ENCODE measurements at regions of chr4 and their contacts with region 1.

Region 1: GRCh38 chr4:38684951-38685844 is 21.2 kb downstream of the KLF3 start:
- DNase-seq: no peak
- ATAC-seq: no peak
- H3K4me3 ChIP-seq: no peak overlapping the region
- H3K4me3 Mint-ChIP-seq: peak overlapping the region in 1 of 3 donors; percentile 67
- H3K27ac ChIP-seq: no peak overlapping the region
- H3K27ac Mint-ChIP-seq: peak overlapping the region; percentile 39 to 67
- H3K4me1 ChIP-seq: peaks cover 33 to 55% of the 10 kb centered on the region in 2 experiments
- H3K4me1 Mint-ChIP-seq: peaks cover 81 to 90% (median 81%) of the 10 kb centered on the region in 3 donors
- H3K27me3 ChIP-seq: no peaks in the 10 kb centered on the region
- H3K27me3 Mint-ChIP-seq: no peaks in the 10 kb centered on the region

Region 2: GRCh38 chr4:38644201-38644600 is 41.0 kb before region 1 on chr4:
- CTCF ChIA-PET with region 1: no interaction called
- POLR2A ChIA-PET with region 1: interaction called in 1 of 2 experiments, 11 read pairs
- DNase-seq: no peak
- ATAC-seq: no peak
- H3K4me3 ChIP-seq: no peak overlapping the region
- H3K4me3 Mint-ChIP-seq: no peak overlapping the region
- H3K27ac ChIP-seq: no peak overlapping the region
- H3K27ac Mint-ChIP-seq: no peak overlapping the region
- H3K4me1 ChIP-seq: peaks cover 3 to 5% of the 10 kb centered on the region in 2 experiments
- H3K4me1 Mint-ChIP-seq: peaks cover 11 to 17% (median 15%) of the 10 kb centered on the region in 3 donors
- H3K27me3 ChIP-seq: no peaks in the 10 kb centered on the region
- H3K27me3 Mint-ChIP-seq: peaks cover 0 to 3% of the 10 kb centered on the region in 2 donors

Region 3: GRCh38 chr4:38782452-38783108 is 97.4 kb after region 1 on chr4 and contains the start of gene TLR10:
- CTCF ChIA-PET with region 1: no interaction called
- POLR2A ChIA-PET with region 1: no interaction called
- DNase-seq: peak in 13 of 35 experiments; percentile 18 to 73 (median 28)
- ATAC-seq: peak; percentile 51 to 73 (median 64)
- H3K4me3 ChIP-seq: no peak within 1 kb of the TSS
- H3K4me3 Mint-ChIP-seq: peak within 1 kb of the TSS in 1 of 3 donors; percentile 71
- H3K27ac ChIP-seq: no peak within 1 kb of the TSS
- H3K27ac Mint-ChIP-seq: peak within 1 kb of the TSS in 1 of 2 donors; percentile 44
- H3K4me1 ChIP-seq: peaks cover 0 to 2% of the 10 kb centered on the region in 2 experiments
- H3K4me1 Mint-ChIP-seq: peaks cover 3 to 6% (median 5%) of the 10 kb centered on the region in 3 donors
- H3K27me3 ChIP-seq: no peaks in the 10 kb centered on the region
- H3K27me3 Mint-ChIP-seq: no peaks in the 10 kb centered on the region
- total RNA-seq, gene TLR10: 0.47 to 2.6 (median 0.96) TPM

Region 4: GRCh38 chr4:39786838-39787237 is 1101.6 kb after region 1 on chr4:
- CTCF ChIA-PET with region 1: no interaction called
- POLR2A ChIA-PET with region 1: no interaction called
- DNase-seq: no peak
- ATAC-seq: no peak
- H3K4me3 ChIP-seq: no peak overlapping the region
- H3K4me3 Mint-ChIP-seq: no peak overlapping the region
- H3K27ac ChIP-seq: no peak overlapping the region
- H3K27ac Mint-ChIP-seq: no peak overlapping the region
- H3K4me1 ChIP-seq: no peaks in the 10 kb centered on the region
- H3K4me1 Mint-ChIP-seq: peaks cover 0 to 4% (median 0%) of the 10 kb centered on the region in 3 donors
- H3K27me3 ChIP-seq: no peaks in the 10 kb centered on the region
- H3K27me3 Mint-ChIP-seq: no peaks in the 10 kb centered on the region

Measured in T-cell (primary cell).